A549 (cell line): ENCODE measurements at regions of chr1 and their contacts with region 1.

Region 1: GRCh38 chr1:183165456-183165855 is 20.6 kb upstream of the LAMC2 start:
- DNase-seq: no peak
- ATAC-seq: no peak
- H3K4me3 ChIP-seq: no peak overlapping the region
- H3K27ac ChIP-seq: peak overlapping the region; percentile 75 to 81; a peak in 4 of 6 replicates
- H3K4me1 ChIP-seq: peaks cover 46% of the 10 kb centered on the region
- CTCF ChIP-seq: no peak
- EP300 ChIP-seq: no peak
- POLR2A ChIP-seq: no peak
- RAD21 ChIP-seq: no peak

Region 2: DNA sequence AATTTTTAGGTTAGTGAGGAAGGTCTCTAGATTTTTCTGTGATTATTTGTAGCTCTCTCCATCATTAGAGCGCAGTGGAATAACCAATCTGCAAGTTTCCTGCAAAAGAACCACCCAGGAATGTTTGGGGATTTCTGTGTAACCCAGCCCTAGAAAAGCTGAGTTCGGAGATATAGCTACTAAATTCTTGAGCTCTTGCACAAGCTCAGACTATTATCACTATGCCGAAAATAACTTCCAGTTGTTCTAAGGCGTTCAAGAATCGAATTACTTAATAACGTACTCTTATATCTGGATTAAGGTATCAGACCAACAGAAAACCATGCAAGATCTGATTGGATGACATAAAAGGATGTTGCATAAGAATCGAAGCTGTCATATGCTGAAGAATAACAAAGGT is 13.0 kb after region 1 on chr1:
- CTCF ChIA-PET with region 1: interaction called, 16 read pairs
- POLR2A ChIA-PET with region 1: interaction called, 5 read pairs
- DNase-seq: no peak
- ATAC-seq: no peak
- H3K4me3 ChIP-seq: no peak overlapping the region
- H3K27ac ChIP-seq: peak overlapping the region; percentile 76 to 79; a peak in 3 of 6 replicates
- H3K4me1 ChIP-seq: peaks cover 43% of the 10 kb centered on the region
- CTCF ChIP-seq: no peak
- EP300 ChIP-seq: no peak
- POLR2A ChIP-seq: no peak
- RAD21 ChIP-seq: no peak